Dendritic cell treated with granulocyte-macrophage colony-stimulating factor and Interleukin-4, amounts not matched to agents 40 ng/mL and 50 ng/mL, for 4 days (primary cell): ENCODE measurements at regions of chr16 and their contacts with region 1.

Region 1: DNA sequence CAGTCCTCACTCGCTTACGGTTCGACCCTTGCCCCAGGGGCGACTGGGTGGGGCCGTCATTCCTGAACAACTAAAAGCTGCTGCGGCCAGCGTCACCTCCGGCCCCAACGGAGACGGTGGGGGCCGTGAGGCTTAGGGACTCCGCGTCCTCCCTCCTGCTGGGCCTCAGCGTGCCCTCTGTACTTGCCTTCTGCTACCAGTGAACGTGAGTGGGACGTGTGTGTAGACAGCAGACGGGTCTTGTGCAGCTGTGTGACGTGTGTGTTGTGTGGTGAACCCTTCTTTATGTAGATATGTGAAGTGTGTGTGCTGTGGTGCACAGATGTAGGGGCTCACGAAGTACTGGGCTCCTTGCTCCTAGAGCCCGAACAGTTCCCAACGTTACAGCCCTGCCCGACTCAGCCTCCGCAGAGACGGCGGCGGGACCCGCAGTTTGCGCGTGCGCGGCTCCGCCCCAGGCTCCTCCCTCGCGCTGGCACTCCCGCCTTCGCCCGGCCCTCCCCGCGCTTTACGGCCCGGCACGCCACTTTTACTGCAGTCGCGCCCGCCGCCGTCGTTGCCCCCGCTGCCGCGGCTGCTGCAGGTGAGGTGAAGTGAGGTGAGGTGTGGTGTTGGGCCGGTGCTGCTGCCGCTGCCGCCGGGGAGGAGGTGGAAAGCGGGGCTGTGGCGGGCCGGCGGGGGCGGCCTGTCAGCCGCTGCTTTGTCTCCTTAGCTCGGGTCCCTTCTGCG is at the start of gene PHAF1:
- H3K4me3 Mint-ChIP-seq: peak within 1 kb of the TSS; percentile 99
- H3K27ac Mint-ChIP-seq: peak within 1 kb of the TSS; percentile 92
- H3K4me1 Mint-ChIP-seq: peaks cover 69% of the 10 kb centered on the region
- H3K27me3 Mint-ChIP-seq: no peaks in the 10 kb centered on the region

Region 2: GRCh38 chr16:66717112-66717675 is 392.4 kb before region 1 on chr16:
- intact Hi-C with region 1: no loop called
- H3K4me3 Mint-ChIP-seq: no peak overlapping the region
- H3K27ac Mint-ChIP-seq: no peak overlapping the region
- H3K4me1 Mint-ChIP-seq: no peaks in the 10 kb centered on the region
- H3K27me3 Mint-ChIP-seq: no peaks in the 10 kb centered on the region

Region 3: DNA sequence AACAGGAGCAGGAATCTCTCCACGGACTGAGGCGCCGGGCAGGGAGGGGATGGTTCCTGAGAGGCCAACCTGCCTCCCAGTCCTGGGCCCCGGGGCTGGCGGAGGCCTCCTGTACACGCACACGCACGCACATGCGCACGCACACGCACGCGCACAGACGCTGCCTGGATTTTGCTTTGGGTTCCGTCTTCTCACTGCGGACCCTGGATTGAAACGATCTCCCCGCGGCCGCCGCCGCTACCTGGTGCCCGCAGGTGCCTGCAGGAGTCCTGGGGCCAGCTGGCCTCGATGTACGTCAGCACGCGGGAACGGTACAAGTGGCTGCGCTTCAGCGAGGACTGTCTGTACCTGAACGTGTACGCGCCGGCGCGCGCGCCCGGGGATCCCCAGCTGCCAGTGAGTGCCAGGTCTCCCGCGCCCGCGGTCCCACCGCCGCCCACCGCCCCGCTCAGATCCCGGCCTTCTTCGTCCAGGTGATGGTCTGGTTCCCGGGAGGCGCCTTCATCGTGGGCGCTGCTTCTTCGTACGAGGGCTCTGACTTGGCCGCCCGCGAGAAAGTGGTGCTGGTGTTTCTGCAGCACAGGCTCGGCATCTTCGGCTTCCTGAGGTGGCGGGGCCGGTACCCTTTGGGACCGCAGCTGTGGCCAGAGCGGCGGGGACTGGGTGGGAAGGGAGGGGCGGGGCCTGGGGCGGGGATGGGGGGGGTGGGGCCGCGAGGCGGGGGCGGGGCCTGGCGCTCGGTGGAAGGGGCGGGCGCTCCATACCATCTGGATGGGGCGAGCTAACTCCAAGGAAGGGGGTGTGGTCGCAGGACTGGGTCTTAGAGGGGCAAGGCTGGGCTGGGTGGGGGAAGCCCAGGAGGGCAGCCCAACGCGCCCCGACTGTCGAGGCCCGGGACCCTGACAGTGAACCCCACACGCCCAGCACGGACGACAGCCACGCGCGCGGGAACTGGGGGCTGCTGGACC is 108.9 kb before region 1 on chr16:
- intact Hi-C with region 1: no loop called
- H3K4me3 Mint-ChIP-seq: peak overlapping the region; percentile 79
- H3K27ac Mint-ChIP-seq: peak overlapping the region; percentile 62
- H3K4me1 Mint-ChIP-seq: peaks cover 11% of the 10 kb centered on the region
- H3K27me3 Mint-ChIP-seq: peaks cover 46% of the 10 kb centered on the region

Region 4: DNA sequence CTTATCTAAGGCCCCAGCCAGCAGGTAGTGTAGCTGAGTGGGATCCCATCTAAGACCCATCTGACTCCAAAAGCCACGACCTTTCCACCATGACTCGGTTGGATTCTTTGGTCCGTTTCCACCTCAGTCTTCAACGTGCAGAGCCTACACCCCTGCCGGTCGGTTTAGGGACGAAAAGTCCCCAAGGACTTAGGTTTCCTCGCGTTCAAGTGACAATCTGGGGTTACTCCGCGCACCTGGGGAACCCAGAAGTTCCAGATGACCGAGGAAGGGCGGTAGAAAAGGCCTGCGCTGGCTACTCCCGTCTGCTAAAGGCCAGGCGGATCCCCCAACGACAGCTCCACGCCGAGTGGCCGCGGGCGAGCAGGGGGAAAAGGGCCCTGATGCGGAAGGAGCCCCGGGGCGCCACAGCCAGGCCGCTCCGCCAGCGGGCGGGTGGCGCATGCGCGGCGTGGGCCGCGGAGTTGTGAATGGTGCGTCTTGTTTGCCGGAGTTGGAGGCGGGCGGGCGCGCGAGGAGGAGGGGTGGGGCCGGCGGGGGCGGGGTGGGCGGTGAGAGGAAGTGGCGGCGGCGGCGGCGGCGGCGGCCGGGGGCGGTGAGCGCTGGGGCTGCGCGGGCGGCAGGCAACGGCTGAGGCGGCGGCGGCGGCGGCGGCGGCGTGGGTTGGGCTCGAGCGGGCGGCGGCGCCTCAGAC is 80.9 kb before region 1 on chr16 and contains the start of gene CBFB:
- intact Hi-C with region 1: loop called (anchors 5 kb)
- H3K4me3 Mint-ChIP-seq: peak within 1 kb of the TSS; percentile 88
- H3K27ac Mint-ChIP-seq: peak within 1 kb of the TSS; percentile 87
- H3K4me1 Mint-ChIP-seq: peaks cover 38% of the 10 kb centered on the region
- H3K27me3 Mint-ChIP-seq: no peaks in the 10 kb centered on the region

Region 5: GRCh38 chr16:67141426-67141825 is 31.9 kb after region 1 on chr16:
- intact Hi-C with region 1: no loop called
- H3K4me3 Mint-ChIP-seq: no peak overlapping the region
- H3K27ac Mint-ChIP-seq: no peak overlapping the region
- H3K4me1 Mint-ChIP-seq: peaks cover 12% of the 10 kb centered on the region
- H3K27me3 Mint-ChIP-seq: no peaks in the 10 kb centered on the region